ENCODE measurements at regions of chr15 and their contacts with region 1.

Region 1: GRCh38 chr15:40906091-40906990 is 12.1 kb downstream of the VPS18 start:
- DNase-seq: peak; percentile 86 to 98
- H3K4me3 ChIP-seq: peak overlapping the region; percentile 46; the same call in 1 of the 2 replicates
- H3K27ac ChIP-seq: peak overlapping the region; percentile 83
- H3K4me1 ChIP-seq: peaks cover 18% of the 10 kb centered on the region
- H3K27me3 ChIP-seq: no peaks in the 10 kb centered on the region
- CTCF ChIP-seq: peak; percentile 73

Region 2: DNA sequence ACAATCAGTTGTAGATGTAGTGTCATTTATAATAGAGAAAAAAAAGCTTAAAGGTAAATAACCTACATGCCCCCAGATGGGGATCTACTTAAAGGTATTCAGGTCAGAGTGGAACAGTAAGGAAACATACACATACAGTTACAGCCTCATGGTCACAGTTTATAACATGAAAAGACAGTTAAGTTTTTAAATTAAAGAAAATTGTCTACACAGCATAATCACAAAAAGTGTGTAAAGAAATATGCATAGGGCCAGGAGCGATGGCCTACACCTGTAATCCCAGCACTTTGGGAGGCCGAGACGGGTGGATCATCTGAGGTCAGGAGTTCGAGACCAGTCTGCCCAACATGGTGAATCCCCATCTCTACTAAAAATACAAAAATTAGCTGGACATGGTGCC is 39.1 kb before region 1 on chr15:
- CTCF ChIA-PET with region 1: no interaction called
- POLR2A ChIA-PET with region 1: no interaction called
- intact Hi-C with region 1: no loop called
- DNase-seq: no peak
- H3K4me3 ChIP-seq: no peak overlapping the region
- H3K27ac ChIP-seq: peak overlapping the region; percentile 81
- H3K4me1 ChIP-seq: peaks cover 64% of the 10 kb centered on the region
- H3K27me3 ChIP-seq: no peaks in the 10 kb centered on the region
- CTCF ChIP-seq: no peak

Region 3: DNA sequence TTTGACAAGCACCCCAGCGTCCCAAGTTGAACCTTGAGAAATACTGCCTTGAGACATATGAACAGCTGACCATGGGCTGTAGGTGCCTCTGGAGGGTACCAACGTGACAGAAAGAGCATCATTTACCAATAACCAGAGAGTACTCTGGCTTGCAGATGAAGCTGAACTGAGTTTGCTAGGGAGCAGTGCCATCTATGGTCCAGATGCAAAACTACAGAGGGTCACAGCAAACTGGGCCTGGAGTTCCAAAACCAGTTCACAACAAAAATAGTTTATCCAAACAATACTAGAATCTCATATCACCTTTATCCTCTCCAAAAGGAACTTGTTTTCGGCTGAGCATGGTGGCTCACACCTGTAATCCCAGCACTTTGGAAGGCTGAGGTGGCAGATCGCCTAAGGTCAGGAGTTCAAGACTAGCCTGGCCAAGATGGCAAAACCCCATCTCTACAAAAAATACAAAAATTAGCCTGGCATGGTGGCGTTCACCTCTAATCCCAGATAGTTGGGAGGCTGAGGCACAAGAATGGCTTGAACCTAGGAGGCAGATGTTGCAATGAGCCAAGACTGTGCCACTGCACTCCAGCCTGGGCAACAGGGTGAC is 116.2 kb after region 1 on chr15:
- CTCF ChIA-PET with region 1: interaction called, 12 read pairs
- POLR2A ChIA-PET with region 1: interaction called, 4 read pairs
- intact Hi-C with region 1: loop called (anchors 1 kb)
- DNase-seq: peak in 1 of 2 experiments; percentile 36
- H3K4me3 ChIP-seq: no peak overlapping the region
- H3K27ac ChIP-seq: no peak overlapping the region
- H3K4me1 ChIP-seq: peaks cover 12% of the 10 kb centered on the region
- H3K27me3 ChIP-seq: no peaks in the 10 kb centered on the region
- CTCF ChIP-seq: peak; percentile 65

Region 4: GRCh38 chr15:41180206-41180789 is 274.0 kb after region 1 on chr15:
- CTCF ChIA-PET with region 1: interaction called, 30 read pairs
- POLR2A ChIA-PET with region 1: interaction called, 7 read pairs
- intact Hi-C with region 1: loop called (anchors 1 kb)
- DNase-seq: no peak
- H3K4me3 ChIP-seq: no peak overlapping the region
- H3K27ac ChIP-seq: no peak overlapping the region
- H3K4me1 ChIP-seq: peaks cover 9% of the 10 kb centered on the region
- H3K27me3 ChIP-seq: no peaks in the 10 kb centered on the region
- CTCF ChIP-seq: no peak

Region 5: GRCh38 chr15:41811432-41812195 is 905.3 kb after region 1 on chr15:
- CTCF ChIA-PET with region 1: no interaction called
- POLR2A ChIA-PET with region 1: no interaction called
- intact Hi-C with region 1: loop called (anchors 5 kb)
- DNase-seq: peak; percentile 52 to 73
- H3K4me3 ChIP-seq: no peak overlapping the region
- H3K27ac ChIP-seq: no peak overlapping the region
- H3K4me1 ChIP-seq: no peaks in the 10 kb centered on the region
- H3K27me3 ChIP-seq: no peaks in the 10 kb centered on the region
- CTCF ChIP-seq: peak; percentile 78

Region 6: DNA sequence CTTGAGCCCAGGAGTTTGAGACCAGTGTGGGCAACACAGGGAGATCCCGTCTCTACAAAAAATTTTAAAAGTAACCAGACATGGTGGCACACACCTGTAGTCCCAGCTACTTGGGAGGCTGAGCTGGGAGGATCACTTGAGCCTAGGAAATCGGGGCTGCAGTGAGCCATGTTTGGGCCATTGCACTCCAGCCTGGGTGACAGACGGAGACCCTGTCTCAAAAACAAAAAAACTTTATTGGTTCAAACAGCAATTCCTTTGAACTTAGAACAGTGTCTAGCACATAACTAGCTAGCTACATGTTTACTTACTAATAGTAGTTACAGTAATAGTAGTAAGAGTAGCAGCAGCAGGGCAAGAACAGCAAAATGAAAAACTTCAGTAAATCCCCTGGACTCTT is 1652.4 kb after region 1 on chr15:
- CTCF ChIA-PET with region 1: interaction called, 11 read pairs
- POLR2A ChIA-PET with region 1: no interaction called
- intact Hi-C with region 1: no loop called
- DNase-seq: no peak
- H3K4me3 ChIP-seq: no peak overlapping the region
- H3K27ac ChIP-seq: no peak overlapping the region
- H3K4me1 ChIP-seq: no peaks in the 10 kb centered on the region
- H3K27me3 ChIP-seq: no peaks in the 10 kb centered on the region
- CTCF ChIP-seq: no peak

Measured in PC-9 (cell line).